BJ (cell line): ENCODE measurements at regions of chr13 and their contacts with region 1.

Region 1: DNA sequence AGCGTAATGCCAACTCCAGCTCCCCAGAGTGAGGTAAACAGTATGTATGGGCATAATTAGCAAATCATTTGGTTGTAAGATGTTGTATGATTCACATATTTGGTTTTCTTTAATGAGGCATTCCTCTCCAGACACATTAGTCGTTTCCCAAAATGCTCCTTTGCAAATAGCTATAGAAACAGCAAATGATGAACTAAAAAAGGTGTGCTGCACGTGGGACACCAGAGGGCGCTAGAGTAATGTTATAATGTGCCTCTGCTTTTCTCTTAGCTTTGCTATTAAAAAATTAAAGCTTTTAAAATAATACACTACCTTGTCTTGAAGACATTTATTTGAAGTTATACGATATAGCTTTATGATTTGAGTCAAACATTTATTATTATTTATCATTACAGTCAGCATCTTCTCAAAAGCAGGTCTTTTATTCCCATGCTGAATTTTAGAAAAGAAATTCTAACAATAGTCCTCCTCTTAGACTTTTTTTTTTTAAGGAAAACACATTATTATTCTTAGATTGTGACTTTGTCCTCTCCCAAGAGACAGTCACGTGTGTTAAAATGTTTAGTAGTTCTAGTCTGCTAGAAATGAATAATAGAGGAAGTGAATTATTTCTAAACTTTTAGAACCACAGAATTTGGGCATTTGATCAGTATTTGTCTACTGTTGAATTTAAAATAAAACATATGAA is 121.6 kb upstream of the FRY start:
- DNase-seq: no peak
- H3K4me3 ChIP-seq: no peak overlapping the region
- H3K27me3 ChIP-seq: no peaks in the 10 kb centered on the region
- CTCF ChIP-seq: peak; percentile 81

Region 2: DNA sequence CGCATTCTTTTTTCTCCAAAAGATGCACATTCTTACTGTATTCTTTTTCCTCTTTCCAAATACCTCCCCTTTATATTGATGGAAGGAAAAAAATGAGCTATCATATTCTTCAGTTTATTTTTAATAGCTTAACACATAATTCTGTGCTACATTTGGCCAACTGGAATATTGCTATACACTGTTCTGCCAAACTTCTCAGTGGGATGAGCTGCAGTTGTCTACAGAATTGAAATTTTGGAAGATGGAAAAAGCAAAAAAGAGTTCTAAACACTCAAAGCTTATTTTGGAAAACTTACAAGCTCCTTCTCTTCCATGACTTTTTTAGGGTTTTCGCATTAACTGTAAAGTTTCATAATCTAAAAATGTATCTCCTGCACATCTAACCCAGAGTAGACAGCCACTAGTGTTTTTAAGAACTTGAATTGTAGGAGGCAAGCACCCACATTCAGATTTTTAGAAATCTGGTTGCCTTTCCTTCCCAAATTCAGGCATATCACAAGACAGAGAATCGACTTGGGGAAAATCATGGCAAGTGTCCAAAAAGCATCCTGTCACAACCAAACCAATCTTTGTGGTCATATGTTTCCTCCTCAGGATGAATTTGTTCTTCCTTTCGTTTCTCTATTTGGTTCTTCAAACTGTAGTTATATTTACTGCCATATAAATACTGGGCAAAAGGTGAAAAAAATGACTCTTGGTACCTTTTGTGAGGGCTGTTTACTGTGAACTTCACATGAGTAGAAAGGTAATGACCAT is 10.1 kb after region 1 on chr13:
- CTCF ChIA-PET with region 1: interaction called, 13 read pairs
- POLR2A ChIA-PET with region 1: no interaction called
- DNase-seq: no peak
- H3K4me3 ChIP-seq: no peak overlapping the region
- H3K27me3 ChIP-seq: no peaks in the 10 kb centered on the region
- CTCF ChIP-seq: no peak

Region 3: GRCh38 chr13:31945202-31945978 is 35.4 kb after region 1 on chr13:
- CTCF ChIA-PET with region 1: interaction called, 19 read pairs
- POLR2A ChIA-PET with region 1: no interaction called
- DNase-seq: peak; percentile 62
- H3K4me3 ChIP-seq: no peak overlapping the region; the same call in 1 of the 2 replicates
- H3K27me3 ChIP-seq: no peaks in the 10 kb centered on the region
- CTCF ChIP-seq: no peak

Region 4: GRCh38 chr13:32315238-32316027 is 405.4 kb after region 1 on chr13 and contains the starts of genes BRCA2 and ZAR1L:
- CTCF ChIA-PET with region 1: interaction called, 18 read pairs
- POLR2A ChIA-PET with region 1: no interaction called
- DNase-seq: peak; percentile 35
- H3K4me3 ChIP-seq: peak within 1 kb of the TSS; percentile 60
- H3K27me3 ChIP-seq: no peaks in the 10 kb centered on the region
- CTCF ChIP-seq: no peak
- polyA plus RNA-seq, gene BRCA2: 0.91 and 1.2 TPM in 2 replicates
- polyA plus RNA-seq, gene ZAR1L: not detected in 2 replicates